Caco-2 (cell line): ENCODE measurements at regions of chr1 and their contacts with region 1.

Region 1: GRCh38 chr1:45359882-45360513 is 19.8 kb upstream of the MUTYH start:
- DNase-seq: peak in 1 of 2 experiments; percentile 53
- H3K4me3 ChIP-seq: no peak overlapping the region
- H3K4me3 Mint-ChIP-seq: no peak overlapping the region
- H3K27ac Mint-ChIP-seq: no peak overlapping the region
- H3K4me1 ChIP-seq: no peaks in the 10 kb centered on the region
- H3K4me1 Mint-ChIP-seq: peaks cover 20% of the 10 kb centered on the region
- H3K27me3 ChIP-seq: no peaks in the 10 kb centered on the region
- H3K27me3 Mint-ChIP-seq: no peaks in the 10 kb centered on the region
- CTCF ChIP-seq: peak; percentile 39 to 40

Region 2: DNA sequence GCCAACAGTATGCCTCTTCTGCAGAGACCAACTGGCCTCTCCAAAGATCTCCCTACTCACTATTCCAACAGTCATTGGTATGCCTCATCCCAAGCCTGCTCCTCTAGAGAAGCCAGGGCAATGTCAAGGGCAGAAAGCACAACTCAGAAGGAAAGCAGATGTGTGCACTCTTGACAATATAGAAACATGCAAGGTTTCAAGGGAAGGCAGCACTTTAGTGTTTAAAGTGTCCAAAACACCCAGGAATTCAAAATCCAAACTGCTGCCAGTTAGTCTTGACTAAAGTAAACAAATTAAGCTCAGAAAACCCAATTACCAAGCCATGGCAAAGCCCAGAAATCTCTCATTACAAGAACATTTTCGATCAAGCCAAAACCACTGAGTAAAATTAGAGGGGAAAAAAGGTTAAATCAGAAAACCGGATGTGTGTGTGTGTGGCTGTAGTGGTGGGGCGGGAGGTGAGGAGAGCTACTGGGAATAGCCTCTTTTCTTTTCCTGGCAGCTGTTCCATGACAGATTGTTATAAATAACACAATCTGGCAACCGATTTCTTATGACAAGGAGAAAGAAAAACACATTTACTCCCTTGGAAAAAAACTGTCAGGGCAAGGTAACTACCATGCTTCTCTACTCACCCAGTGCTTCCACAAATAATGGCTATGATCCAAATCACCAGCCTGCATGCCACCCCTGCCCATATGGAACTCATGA is 412.8 kb before region 1 on chr1:
- CTCF ChIA-PET with region 1: no interaction called
- POLR2A ChIA-PET with region 1: no interaction called
- intact Hi-C with region 1: no loop called
- DNase-seq: no peak
- H3K4me3 ChIP-seq: no peak overlapping the region
- H3K4me3 Mint-ChIP-seq: no peak overlapping the region
- H3K27ac Mint-ChIP-seq: no peak overlapping the region
- H3K4me1 ChIP-seq: peaks cover 13% of the 10 kb centered on the region
- H3K4me1 Mint-ChIP-seq: peaks cover 10% of the 10 kb centered on the region
- H3K27me3 ChIP-seq: no peaks in the 10 kb centered on the region
- H3K27me3 Mint-ChIP-seq: no peaks in the 10 kb centered on the region
- CTCF ChIP-seq: no peak

Region 3: GRCh38 chr1:45370575-45370974 is 10.6 kb after region 1 on chr1:
- CTCF ChIA-PET with region 1: no interaction called
- POLR2A ChIA-PET with region 1: interaction called, 3 read pairs
- intact Hi-C with region 1: loop called (anchors 1 kb)
- DNase-seq: no peak
- H3K4me3 ChIP-seq: no peak overlapping the region
- H3K4me3 Mint-ChIP-seq: no peak overlapping the region
- H3K27ac Mint-ChIP-seq: no peak overlapping the region
- H3K4me1 ChIP-seq: no peaks in the 10 kb centered on the region
- H3K4me1 Mint-ChIP-seq: peaks cover 16% of the 10 kb centered on the region
- H3K27me3 ChIP-seq: no peaks in the 10 kb centered on the region
- H3K27me3 Mint-ChIP-seq: no peaks in the 10 kb centered on the region
- CTCF ChIP-seq: no peak

Region 4: DNA sequence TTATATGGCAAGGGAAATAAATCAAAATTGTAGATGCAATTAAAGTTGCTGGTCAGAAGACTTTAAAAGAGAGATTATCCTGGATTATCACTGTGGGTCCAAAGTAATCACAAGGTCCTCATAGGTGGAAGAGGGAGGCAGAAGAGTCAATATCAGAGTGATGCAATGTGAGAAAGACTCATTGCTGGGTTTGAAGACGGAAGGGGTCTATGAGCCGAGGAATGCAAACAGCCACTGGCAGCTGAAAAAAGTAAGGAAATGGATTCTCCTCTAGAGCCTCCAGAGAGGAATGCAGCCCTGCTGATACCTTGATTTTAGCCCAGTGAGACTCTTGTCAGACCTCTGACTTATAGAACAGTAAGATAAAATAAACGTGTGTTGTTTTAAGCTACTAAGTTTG is 40.1 kb after region 1 on chr1:
- CTCF ChIA-PET with region 1: no interaction called
- POLR2A ChIA-PET with region 1: no interaction called
- intact Hi-C with region 1: loop called (anchors 5 kb)
- DNase-seq: peak; percentile 32 to 43
- H3K4me3 ChIP-seq: no peak overlapping the region
- H3K4me3 Mint-ChIP-seq: no peak overlapping the region
- H3K27ac Mint-ChIP-seq: peak overlapping the region; percentile 42
- H3K4me1 ChIP-seq: peaks cover 17% of the 10 kb centered on the region
- H3K4me1 Mint-ChIP-seq: peaks cover 27% of the 10 kb centered on the region
- H3K27me3 ChIP-seq: no peaks in the 10 kb centered on the region
- H3K27me3 Mint-ChIP-seq: no peaks in the 10 kb centered on the region
- CTCF ChIP-seq: no peak